MCF 10A (cell line): ENCODE measurements at regions of chr15 and their contacts with region 1.

Region 1: GRCh38 chr15:34621675-34622074 is 38.2 kb upstream of the GOLGA8B start:
- DNase-seq: peak; percentile 51
- H3K4me3 Mint-ChIP-seq: no peak overlapping the region
- H3K27ac Mint-ChIP-seq: no peak overlapping the region
- H3K4me1 Mint-ChIP-seq: peaks cover 3% of the 10 kb centered on the region
- H3K27me3 Mint-ChIP-seq: peaks cover 15% of the 10 kb centered on the region
- CTCF ChIP-seq: peak; percentile 52

Region 2: GRCh38 chr15:34456658-34457057 is 165.0 kb before region 1 on chr15:
- CTCF ChIA-PET with region 1: no interaction called
- POLR2A ChIA-PET with region 1: no interaction called
- intact Hi-C with region 1: no loop called
- DNase-seq: no peak
- H3K4me3 Mint-ChIP-seq: no peak overlapping the region
- H3K27ac Mint-ChIP-seq: no peak overlapping the region
- H3K4me1 Mint-ChIP-seq: no peaks in the 10 kb centered on the region
- H3K27me3 Mint-ChIP-seq: peaks cover 91% of the 10 kb centered on the region
- CTCF ChIP-seq: no peak

Region 3: DNA sequence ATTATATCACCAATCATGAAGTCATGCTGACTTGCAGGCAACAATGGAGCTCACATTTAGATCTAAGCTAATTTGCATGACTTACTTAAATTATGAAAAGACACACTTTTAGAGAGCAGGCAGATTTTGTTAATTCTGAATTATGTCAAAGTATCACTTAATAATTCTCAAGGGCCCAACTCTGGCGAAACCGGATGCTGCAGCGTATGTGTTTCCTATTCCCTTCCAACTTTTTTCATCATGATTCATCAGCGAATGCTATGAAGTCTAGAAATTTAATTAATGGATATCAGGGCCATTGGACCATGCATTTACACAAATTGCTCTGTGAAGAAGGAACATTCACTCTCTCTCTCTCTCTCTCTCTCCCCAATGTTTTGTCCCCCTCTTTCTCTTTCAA is 120.5 kb before region 1 on chr15:
- CTCF ChIA-PET with region 1: no interaction called
- POLR2A ChIA-PET with region 1: no interaction called
- intact Hi-C with region 1: no loop called
- DNase-seq: no peak
- H3K4me3 Mint-ChIP-seq: no peak overlapping the region
- H3K27ac Mint-ChIP-seq: no peak overlapping the region
- H3K4me1 Mint-ChIP-seq: no peaks in the 10 kb centered on the region
- H3K27me3 Mint-ChIP-seq: peaks cover 81% of the 10 kb centered on the region
- CTCF ChIP-seq: no peak

Region 4: DNA sequence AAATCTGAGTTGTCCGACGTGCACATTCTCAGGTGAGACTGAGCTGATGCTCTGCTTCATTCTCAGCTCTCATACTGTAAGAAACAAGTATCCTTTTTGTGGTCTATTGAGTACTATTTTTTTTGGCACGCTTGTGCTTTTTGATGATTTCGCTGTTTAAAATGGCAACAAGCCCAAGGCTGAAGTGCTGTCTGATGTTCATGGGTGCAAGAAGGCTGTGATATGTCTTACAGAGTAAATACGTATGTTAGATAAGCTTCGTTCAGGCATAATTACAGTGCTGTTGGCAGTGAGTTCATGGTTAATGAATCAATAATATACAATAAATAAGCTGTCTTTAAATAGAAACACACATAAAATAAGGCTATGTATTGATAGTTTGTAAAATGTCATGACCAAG is 320.7 kb after region 1 on chr15:
- CTCF ChIA-PET with region 1: interaction called, 10 read pairs
- POLR2A ChIA-PET with region 1: no interaction called
- intact Hi-C with region 1: no loop called
- DNase-seq: peak; percentile 57
- H3K4me3 Mint-ChIP-seq: no peak overlapping the region
- H3K27ac Mint-ChIP-seq: no peak overlapping the region
- H3K4me1 Mint-ChIP-seq: peaks cover 4% of the 10 kb centered on the region
- H3K27me3 Mint-ChIP-seq: no peaks in the 10 kb centered on the region
- CTCF ChIP-seq: no peak